Activated CD8-positive, alpha-beta T cell treated with anti-CD3 and anti-CD28 coated beads for 36 hours (primary cell): ENCODE measurements at regions of chr7 and their contacts with region 1.

Region 1: GRCh38 chr7:55280031-55280454 is 85.1 kb upstream of the LANCL2 start:
- DNase-seq: peak; percentile 71
- ATAC-seq: peak; percentile 93
- H3K4me3 Mint-ChIP-seq: no peak overlapping the region
- H3K27ac Mint-ChIP-seq: no peak overlapping the region
- H3K4me1 Mint-ChIP-seq: no peaks in the 10 kb centered on the region
- H3K27me3 Mint-ChIP-seq: no peaks in the 10 kb centered on the region
- CTCF ChIP-seq: peak; percentile 73

Region 2: GRCh38 chr7:55240418-55241142 is 39.5 kb before region 1 on chr7:
- CTCF ChIA-PET with region 1: no interaction called
- POLR2A ChIA-PET with region 1: no interaction called
- intact Hi-C with region 1: no loop called
- DNase-seq: no peak
- ATAC-seq: no peak
- H3K4me3 Mint-ChIP-seq: no peak overlapping the region
- H3K27ac Mint-ChIP-seq: no peak overlapping the region
- H3K4me1 Mint-ChIP-seq: no peaks in the 10 kb centered on the region
- H3K27me3 Mint-ChIP-seq: peaks cover 9% of the 10 kb centered on the region
- CTCF ChIP-seq: no peak

Region 3: GRCh38 chr7:55265836-55266642 is 14.0 kb before region 1 on chr7:
- CTCF ChIA-PET with region 1: interaction called, 12 read pairs
- POLR2A ChIA-PET with region 1: no interaction called
- intact Hi-C with region 1: no loop called
- DNase-seq: no peak
- ATAC-seq: no peak
- H3K4me3 Mint-ChIP-seq: no peak overlapping the region
- H3K27ac Mint-ChIP-seq: no peak overlapping the region
- H3K4me1 Mint-ChIP-seq: no peaks in the 10 kb centered on the region
- H3K27me3 Mint-ChIP-seq: peaks cover 3% of the 10 kb centered on the region
- CTCF ChIP-seq: no peak

Region 4: GRCh38 chr7:55415173-55415778 is 135.2 kb after region 1 on chr7:
- CTCF ChIA-PET with region 1: interaction called, 113 read pairs
- POLR2A ChIA-PET with region 1: no interaction called
- intact Hi-C with region 1: loop called (anchors 2 kb)
- DNase-seq: peak; percentile 92
- ATAC-seq: peak; percentile 95
- H3K4me3 Mint-ChIP-seq: no peak overlapping the region
- H3K27ac Mint-ChIP-seq: no peak overlapping the region
- H3K4me1 Mint-ChIP-seq: peaks cover 2% of the 10 kb centered on the region
- H3K27me3 Mint-ChIP-seq: no peaks in the 10 kb centered on the region
- CTCF ChIP-seq: peak; percentile 82